BJ (cell line): ENCODE measurements at regions of chr2 and their contacts with region 1.

Region 1: DNA sequence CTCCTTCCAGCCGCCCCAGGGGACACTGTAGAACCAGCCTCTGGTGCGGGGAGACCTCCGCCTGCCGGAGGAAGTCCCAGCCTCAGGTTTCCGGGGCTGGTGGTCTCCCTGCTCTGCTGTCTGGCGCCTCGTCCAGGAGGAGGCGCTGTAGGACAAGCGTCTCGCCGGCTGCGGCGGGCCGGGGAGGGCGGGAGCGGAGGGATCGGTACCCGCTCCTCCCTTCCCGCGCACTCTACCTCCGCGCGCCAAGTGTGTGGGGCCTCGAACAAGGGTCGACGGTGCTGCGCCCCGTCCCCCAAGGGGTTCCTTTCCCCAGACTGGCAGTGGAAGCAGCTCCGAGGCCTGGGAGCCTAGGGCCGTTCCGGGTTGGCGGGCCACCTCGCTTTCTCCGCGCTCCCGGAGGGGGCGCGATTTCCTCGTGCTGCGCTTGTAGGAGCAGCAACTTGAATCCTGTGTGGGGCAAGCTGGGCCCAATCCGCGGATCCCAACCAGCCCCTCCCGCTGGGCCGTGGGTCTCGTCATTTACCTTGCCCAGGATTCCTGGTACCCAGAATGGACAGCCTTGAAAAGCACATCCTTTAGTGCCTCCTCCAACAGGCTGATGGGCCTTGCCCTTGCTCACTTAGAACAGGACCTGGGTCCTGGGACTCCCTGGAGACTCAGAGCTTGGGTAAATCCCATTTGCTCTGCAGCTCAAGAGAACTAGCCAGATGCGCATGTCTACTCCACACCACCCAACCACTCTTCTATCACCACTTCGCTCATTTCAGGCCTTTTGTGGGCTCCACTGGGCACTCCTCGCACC is 10.6 kb upstream of the HOXD4 start:
- DNase-seq: no peak
- H3K4me3 ChIP-seq: peak overlapping the region; percentile 53
- H3K27me3 ChIP-seq: peaks cover 40% of the 10 kb centered on the region
- CTCF ChIP-seq: peak; percentile 92

Region 2: DNA sequence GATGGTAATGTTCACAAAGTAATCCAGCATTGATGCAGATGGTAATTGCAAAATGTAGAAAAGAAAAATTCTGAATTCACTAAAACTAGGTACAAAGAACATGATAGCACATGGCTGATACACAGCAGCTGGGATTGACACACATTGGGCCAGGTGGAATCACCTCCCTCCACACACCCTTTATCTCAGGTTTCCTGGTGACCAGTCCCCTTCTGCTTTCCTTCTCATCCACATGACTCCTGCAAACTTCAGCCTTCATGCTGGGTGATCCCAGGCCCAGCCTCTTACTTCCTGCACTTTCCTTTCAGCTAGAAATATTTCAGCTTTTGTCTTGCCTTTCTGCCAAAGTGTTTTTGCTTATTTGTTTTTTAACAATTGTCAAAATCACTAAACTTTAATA is 385.5 kb before region 1 on chr2:
- CTCF ChIA-PET with region 1: no interaction called
- POLR2A ChIA-PET with region 1: no interaction called
- DNase-seq: no peak
- H3K4me3 ChIP-seq: no peak overlapping the region
- H3K27me3 ChIP-seq: no peaks in the 10 kb centered on the region
- CTCF ChIP-seq: no peak

Region 3: GRCh38 chr2:176151442-176152369 is 11.0 kb after region 1 on chr2 and contains the start of gene HOXD4:
- CTCF ChIA-PET with region 1: interaction called, 19 read pairs
- POLR2A ChIA-PET with region 1: no interaction called
- DNase-seq: no peak
- H3K4me3 ChIP-seq: no peak within 1 kb of the TSS
- H3K27me3 ChIP-seq: peaks cover 57% of the 10 kb centered on the region
- CTCF ChIP-seq: no peak
- polyA plus RNA-seq, gene HOXD4: 0.12 and 0.28 TPM in 2 replicates

Region 4: GRCh38 chr2:176445956-176446355 is 305.2 kb after region 1 on chr2:
- CTCF ChIA-PET with region 1: interaction called, 17 read pairs
- POLR2A ChIA-PET with region 1: no interaction called
- DNase-seq: peak; percentile 39
- H3K4me3 ChIP-seq: no peak overlapping the region
- H3K27me3 ChIP-seq: no peaks in the 10 kb centered on the region
- CTCF ChIP-seq: no peak

Region 5: DNA sequence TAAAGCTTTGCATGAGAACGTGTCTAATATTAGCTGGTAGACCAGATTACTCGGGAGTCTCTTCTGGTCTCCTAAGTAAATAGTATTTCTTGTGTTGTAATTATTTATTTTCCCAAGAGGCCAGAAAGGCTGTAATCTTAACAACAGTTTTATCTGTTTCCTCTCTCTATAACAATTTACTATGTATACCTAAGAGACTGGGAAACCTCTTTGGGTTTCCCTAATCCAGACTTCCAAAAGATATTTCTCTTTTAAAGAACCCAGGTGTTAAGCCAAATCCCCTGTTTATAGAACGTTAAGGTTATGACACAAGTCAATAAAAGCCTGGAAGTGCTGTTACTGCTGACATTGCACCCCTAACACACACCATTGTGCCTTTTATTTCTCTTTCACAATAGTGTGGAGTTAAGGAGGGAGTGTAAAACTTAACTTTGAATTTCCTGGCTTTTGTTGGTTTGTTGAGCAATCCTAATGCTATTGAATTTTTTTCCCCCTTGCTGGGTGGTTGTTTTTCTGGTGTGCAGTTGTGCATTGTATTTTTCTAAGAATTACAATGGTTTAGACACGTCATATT is 321.2 kb after region 1 on chr2:
- CTCF ChIA-PET with region 1: interaction called, 110 read pairs
- POLR2A ChIA-PET with region 1: no interaction called
- DNase-seq: no peak
- H3K4me3 ChIP-seq: no peak overlapping the region
- H3K27me3 ChIP-seq: no peaks in the 10 kb centered on the region
- CTCF ChIP-seq: no peak

Region 6: GRCh38 chr2:176565641-176566323 is 425.1 kb after region 1 on chr2:
- CTCF ChIA-PET with region 1: interaction called, 29 read pairs
- POLR2A ChIA-PET with region 1: no interaction called
- DNase-seq: no peak
- H3K4me3 ChIP-seq: no peak overlapping the region
- H3K27me3 ChIP-seq: no peaks in the 10 kb centered on the region; the same call in 1 of the 2 replicates
- CTCF ChIP-seq: no peak

Region 7: DNA sequence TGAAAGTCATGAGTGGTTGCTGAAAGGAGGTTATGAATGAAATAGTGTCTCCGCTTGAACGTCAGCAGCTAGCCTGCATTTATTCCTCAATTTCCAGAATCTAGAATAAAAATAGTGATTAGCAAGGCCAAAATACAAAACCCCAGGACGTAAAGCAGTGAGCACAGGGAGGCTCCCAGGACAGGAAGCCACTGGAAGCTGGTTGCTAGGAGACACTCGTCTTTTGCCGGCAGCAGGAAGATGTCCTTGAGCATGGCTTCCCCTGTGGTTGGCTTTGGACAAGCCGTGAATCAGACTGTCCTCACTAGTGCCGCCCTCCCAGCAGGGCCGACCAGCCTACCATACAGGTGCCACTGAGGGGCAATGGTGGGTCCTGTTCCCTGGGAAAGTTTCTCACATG is 502.9 kb after region 1 on chr2:
- CTCF ChIA-PET with region 1: interaction called, 89 read pairs
- POLR2A ChIA-PET with region 1: no interaction called
- DNase-seq: no peak
- H3K4me3 ChIP-seq: no peak overlapping the region
- H3K27me3 ChIP-seq: peaks cover 1% of the 10 kb centered on the region
- CTCF ChIP-seq: no peak